ENCODE measurements at regions of chr9 and their contacts with region 1.

Region 1: DNA sequence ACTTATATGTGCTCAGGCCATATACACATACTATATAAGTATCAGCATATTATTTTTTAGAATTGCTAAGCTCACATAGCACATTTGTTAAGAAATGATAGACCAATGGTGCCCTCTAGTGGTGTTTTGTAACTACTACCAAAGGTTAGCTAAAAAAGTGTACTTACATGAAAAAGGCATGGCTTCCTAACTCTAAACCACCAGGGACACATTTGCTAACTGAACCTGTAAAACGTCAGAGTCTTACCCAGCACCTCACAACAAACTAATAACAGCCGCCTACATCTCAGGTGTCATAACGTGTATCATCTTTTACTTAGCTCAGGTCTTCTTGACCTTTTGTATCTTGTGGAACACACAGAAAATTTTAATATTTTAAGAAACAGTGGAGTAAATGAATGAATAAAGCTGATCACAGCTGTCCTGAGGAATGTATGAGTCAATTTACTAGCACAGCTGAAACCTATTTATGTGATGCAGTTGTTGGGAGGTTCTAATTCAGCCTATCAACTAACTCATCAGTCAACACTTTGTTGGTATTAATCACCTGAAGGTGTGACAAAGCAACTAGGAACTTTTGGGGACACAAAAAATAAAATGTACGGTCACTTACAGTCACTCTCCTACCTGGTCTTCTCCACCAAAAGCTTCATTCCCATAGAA is 72.9 kb downstream of the BAAT start:
- DNase-seq: peak in 1 of 2 donors; percentile 93
- H3K4me3 ChIP-seq: no peak overlapping the region
- H3K27ac ChIP-seq: no peak overlapping the region
- H3K4me1 ChIP-seq: peaks cover 4 to 15% (median 7%) of the 10 kb centered on the region in 4 donors
- H3K27me3 ChIP-seq: no peaks in the 10 kb centered on the region
- CTCF ChIP-seq: peak in 4 of 7 experiments; percentile 44 to 66 (median 62)
- EP300 ChIP-seq: no peak
- POLR2A ChIP-seq: no peak

Region 2: GRCh38 chr9:100601216-100601615 is 710.7 kb before region 1 on chr9:
- intact Hi-C with region 1: loop called (anchors 10 kb)
- DNase-seq: peak; percentile 40 to 76
- H3K4me3 ChIP-seq: no peak overlapping the region
- H3K27ac ChIP-seq: no peak overlapping the region
- H3K4me1 ChIP-seq: peaks cover 0 to 18% (median 8%) of the 10 kb centered on the region in 4 donors
- H3K27me3 ChIP-seq: no peaks in the 10 kb centered on the region
- CTCF ChIP-seq: peak in 3 of 7 experiments; percentile 28 to 45 (median 28)
- EP300 ChIP-seq: no peak
- POLR2A ChIP-seq: no peak

Region 3: DNA sequence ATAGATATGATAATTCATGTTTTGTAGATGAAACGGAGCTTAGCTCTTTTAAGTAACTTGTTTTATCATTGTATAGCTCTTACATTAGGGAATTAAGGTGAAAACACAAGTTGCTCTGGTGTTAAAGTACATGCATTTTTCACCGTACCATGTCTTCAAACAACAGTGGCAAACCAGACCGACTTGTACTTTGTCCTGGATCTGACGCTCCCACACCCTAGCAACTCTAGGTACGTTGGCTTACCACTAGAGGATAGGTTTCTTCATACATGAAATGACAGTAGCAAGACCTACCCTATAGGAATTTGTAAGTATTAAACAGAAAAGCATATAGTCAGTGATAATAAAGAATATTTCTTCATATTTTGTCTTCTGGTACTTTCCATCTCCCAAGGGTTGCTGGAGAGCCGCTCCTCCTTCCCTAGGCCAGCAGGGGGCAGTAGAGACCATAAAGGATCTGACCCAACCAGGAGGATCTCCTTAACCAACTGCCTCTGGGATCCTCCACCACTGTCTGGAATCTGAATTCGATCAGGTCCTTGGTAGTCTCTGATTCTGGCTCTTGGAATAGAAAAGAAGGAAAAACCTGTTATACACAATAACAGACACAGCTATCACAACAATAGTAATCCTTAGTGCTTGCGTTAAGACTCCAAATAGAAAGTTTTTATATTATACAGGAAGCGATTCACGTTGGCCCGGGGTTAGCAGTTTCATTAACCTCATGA is 597.4 kb before region 1 on chr9:
- intact Hi-C with region 1: loop called (anchors 10 kb)
- DNase-seq: peak; percentile 58 to 83
- H3K4me3 ChIP-seq: no peak overlapping the region
- H3K27ac ChIP-seq: no peak overlapping the region
- H3K4me1 ChIP-seq: no peaks in the 10 kb centered on the region
- H3K27me3 ChIP-seq: peaks cover 0 to 8% (median 3%) of the 10 kb centered on the region in 3 donors
- CTCF ChIP-seq: peak in 5 of 7 experiments; percentile 38 to 72 (median 59)
- EP300 ChIP-seq: no peak
- POLR2A ChIP-seq: no peak

Region 4: DNA sequence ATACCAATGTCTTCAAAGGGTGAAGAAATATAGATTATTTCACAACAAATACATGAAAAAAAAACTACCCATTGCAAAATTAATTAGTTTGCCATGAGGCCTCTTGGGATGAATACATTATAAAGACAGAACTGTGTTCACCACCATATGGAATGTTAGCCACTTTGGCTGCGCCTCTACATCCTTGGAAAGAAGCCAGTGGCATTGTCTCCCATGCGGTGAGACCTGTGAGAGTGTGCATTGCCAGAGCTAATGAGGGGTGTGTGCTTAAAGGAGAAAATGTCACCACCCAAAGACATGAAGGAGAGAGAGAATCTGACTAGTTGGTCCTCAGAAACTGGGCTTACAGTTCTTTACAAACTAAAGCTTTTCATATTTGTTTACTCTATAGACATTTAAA is 172.8 kb before region 1 on chr9:
- intact Hi-C with region 1: no loop called
- DNase-seq: no peak
- H3K4me3 ChIP-seq: no peak overlapping the region
- H3K27ac ChIP-seq: no peak overlapping the region
- H3K4me1 ChIP-seq: no peaks in the 10 kb centered on the region
- H3K27me3 ChIP-seq: no peaks in the 10 kb centered on the region
- CTCF ChIP-seq: no peak
- EP300 ChIP-seq: no peak
- POLR2A ChIP-seq: no peak

Measured in stomach (tissue), 19 donors.